IMR-90 (cell line): ENCODE measurements at regions of chr6 and their contacts with region 1.

Region 1: GRCh38 chr6:92122746-92123145 is 1296.6 kb downstream of the EPHA7 start:
- DNase-seq: peak; percentile 1
- ATAC-seq: no peak
- H3K4me3 ChIP-seq: no peak overlapping the region
- H3K27ac ChIP-seq: no peak overlapping the region
- H3K4me1 ChIP-seq: no peaks in the 10 kb centered on the region
- H3K27me3 ChIP-seq: no peaks in the 10 kb centered on the region
- CTCF ChIP-seq: peak; percentile 35
- POLR2A ChIP-seq: no peak
- RAD21 ChIP-seq: peak; percentile 33; the same call in 1 of the 2 replicates

Region 2: DNA sequence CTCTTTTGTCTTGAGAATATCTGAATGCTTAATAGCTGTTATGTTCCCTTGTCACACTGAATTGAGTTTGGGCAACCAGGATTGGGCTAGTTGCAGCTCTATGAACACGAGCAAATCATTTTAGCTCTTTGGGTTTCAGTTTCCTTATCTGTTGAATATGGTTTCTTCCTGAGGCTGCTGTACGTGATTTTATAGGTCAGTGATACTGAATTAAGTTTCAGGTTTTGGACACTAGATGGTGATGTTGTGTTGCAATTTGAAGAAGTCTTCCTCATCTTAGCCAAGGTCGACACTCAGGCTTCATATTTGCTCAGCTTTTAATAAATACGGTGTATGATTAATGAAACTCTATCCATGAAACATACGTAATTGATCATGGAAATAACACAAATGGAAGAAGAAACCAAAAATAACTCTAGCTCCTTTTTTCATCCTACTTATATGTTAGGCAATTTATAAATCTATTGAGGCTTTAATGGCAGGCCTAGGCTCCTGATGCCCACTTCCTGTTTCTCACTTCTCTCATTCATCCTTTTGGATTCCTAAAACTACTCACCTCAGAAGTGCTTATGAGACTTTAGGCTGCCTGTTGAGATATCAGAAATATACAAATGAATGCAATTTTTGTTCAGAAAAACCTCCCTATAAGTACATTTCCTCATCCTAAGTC is 1181.8 kb before region 1 on chr6:
- CTCF ChIA-PET with region 1: no interaction called
- POLR2A ChIA-PET with region 1: no interaction called
- dilution Hi-C with region 1: no loop called
- in situ Hi-C with region 1: no loop called
- intact Hi-C with region 1: loop called (anchors 5 kb)
- DNase-seq: peak; percentile 66
- ATAC-seq: peak; percentile 85
- H3K4me3 ChIP-seq: no peak overlapping the region; the same call in 1 of the 2 replicates
- H3K27ac ChIP-seq: no peak overlapping the region
- H3K4me1 ChIP-seq: no peaks in the 10 kb centered on the region
- H3K27me3 ChIP-seq: no peaks in the 10 kb centered on the region
- CTCF ChIP-seq: peak; percentile 60
- POLR2A ChIP-seq: no peak
- RAD21 ChIP-seq: peak; percentile 64

Region 3: GRCh38 chr6:91330896-91331295 is 791.9 kb before region 1 on chr6:
- CTCF ChIA-PET with region 1: no interaction called
- POLR2A ChIA-PET with region 1: no interaction called
- dilution Hi-C with region 1: no loop called
- in situ Hi-C with region 1: no loop called
- intact Hi-C with region 1: loop called (anchors 5 kb)
- DNase-seq: no peak
- ATAC-seq: no peak
- H3K4me3 ChIP-seq: no peak overlapping the region
- H3K27ac ChIP-seq: no peak overlapping the region
- H3K4me1 ChIP-seq: no peaks in the 10 kb centered on the region
- H3K27me3 ChIP-seq: no peaks in the 10 kb centered on the region
- CTCF ChIP-seq: no peak
- POLR2A ChIP-seq: no peak
- RAD21 ChIP-seq: no peak

Region 4: DNA sequence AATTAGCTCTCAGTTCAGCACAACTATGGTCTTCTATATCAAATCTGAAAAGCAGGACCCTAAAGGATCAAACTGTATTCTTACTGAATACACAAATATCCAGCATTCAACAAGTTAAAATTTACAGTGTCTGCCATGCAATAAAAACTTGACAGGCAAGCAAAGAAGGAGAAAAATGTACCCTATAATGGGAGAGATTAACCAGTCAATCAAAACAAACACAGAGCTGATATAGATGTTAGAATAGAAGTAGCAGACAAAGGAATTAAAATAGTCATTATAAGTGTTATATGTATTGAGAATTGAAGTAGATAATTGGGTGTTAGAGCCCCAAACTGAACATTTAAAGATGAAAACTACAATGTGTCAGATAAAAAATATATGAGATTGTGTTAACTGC is 381.8 kb after region 1 on chr6:
- CTCF ChIA-PET with region 1: no interaction called
- POLR2A ChIA-PET with region 1: no interaction called
- dilution Hi-C with region 1: no loop called
- in situ Hi-C with region 1: no loop called
- intact Hi-C with region 1: no loop called
- DNase-seq: no peak
- ATAC-seq: no peak
- H3K4me3 ChIP-seq: no peak overlapping the region
- H3K27ac ChIP-seq: no peak overlapping the region
- H3K4me1 ChIP-seq: no peaks in the 10 kb centered on the region
- H3K27me3 ChIP-seq: no peaks in the 10 kb centered on the region
- CTCF ChIP-seq: no peak
- POLR2A ChIP-seq: no peak
- RAD21 ChIP-seq: no peak

Region 5: DNA sequence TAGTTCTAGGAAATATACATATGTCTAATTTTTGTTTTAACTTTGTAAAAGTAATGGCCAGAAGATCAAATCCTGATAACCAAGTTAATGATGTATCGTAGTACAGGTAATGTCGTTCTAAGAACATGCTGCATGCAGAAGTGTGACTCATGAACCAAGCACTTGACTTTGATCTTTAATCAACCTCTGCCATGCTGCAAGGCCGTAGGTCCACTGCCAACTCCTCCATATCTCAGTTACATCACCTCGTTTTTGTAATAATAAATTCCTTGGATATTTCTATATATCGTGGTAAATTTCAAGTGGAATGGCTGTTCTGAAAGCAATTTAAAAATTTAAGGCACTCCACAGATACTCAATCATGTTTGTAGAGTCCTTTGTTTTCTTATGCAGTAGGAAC is 524.9 kb after region 1 on chr6:
- CTCF ChIA-PET with region 1: no interaction called
- POLR2A ChIA-PET with region 1: no interaction called
- dilution Hi-C with region 1: no loop called
- in situ Hi-C with region 1: no loop called
- intact Hi-C with region 1: loop called (anchors 2 kb)
- DNase-seq: no peak
- ATAC-seq: no peak
- H3K4me3 ChIP-seq: no peak overlapping the region
- H3K27ac ChIP-seq: no peak overlapping the region
- H3K4me1 ChIP-seq: no peaks in the 10 kb centered on the region
- H3K27me3 ChIP-seq: no peaks in the 10 kb centered on the region
- CTCF ChIP-seq: no peak
- POLR2A ChIP-seq: no peak
- RAD21 ChIP-seq: no peak

Region 6: DNA sequence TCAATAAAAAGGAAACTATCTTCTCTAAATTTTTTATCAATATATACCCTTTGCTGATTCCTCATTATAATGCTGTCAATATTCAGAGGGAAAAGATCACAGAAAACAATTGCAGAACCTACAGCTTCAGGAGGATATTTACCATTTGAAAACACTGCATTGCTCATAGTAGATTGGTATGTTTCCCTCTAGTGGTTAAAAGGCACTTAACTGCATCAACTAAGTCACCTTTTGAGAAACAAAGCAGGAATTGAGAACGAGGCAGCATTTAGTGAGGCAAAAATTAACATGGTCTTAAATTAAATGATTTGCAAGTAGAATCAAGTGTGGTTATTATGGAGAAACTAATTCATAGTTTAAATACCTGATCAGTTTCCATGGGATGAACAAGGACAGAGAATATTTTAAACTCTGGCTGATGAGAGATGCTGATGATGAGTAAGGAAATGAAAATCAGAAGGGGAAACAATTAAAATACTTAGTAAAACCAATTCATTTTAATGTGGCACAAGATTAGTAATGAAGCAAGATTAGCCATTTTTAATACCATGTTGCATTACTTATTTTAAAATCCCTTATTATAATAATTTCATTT is 654.5 kb after region 1 on chr6:
- CTCF ChIA-PET with region 1: no interaction called
- POLR2A ChIA-PET with region 1: no interaction called
- dilution Hi-C with region 1: no loop called
- in situ Hi-C with region 1: no loop called
- intact Hi-C with region 1: loop called (anchors 5 kb)
- DNase-seq: peak; percentile 42
- ATAC-seq: peak; percentile 62
- H3K4me3 ChIP-seq: no peak overlapping the region
- H3K27ac ChIP-seq: no peak overlapping the region
- H3K4me1 ChIP-seq: no peaks in the 10 kb centered on the region
- H3K27me3 ChIP-seq: no peaks in the 10 kb centered on the region
- CTCF ChIP-seq: peak; percentile 56
- POLR2A ChIP-seq: no peak
- RAD21 ChIP-seq: peak; percentile 54